OCI-LY7 (cell line): ENCODE measurements at regions of chr3 and their contacts with region 1.

Region 1: DNA sequence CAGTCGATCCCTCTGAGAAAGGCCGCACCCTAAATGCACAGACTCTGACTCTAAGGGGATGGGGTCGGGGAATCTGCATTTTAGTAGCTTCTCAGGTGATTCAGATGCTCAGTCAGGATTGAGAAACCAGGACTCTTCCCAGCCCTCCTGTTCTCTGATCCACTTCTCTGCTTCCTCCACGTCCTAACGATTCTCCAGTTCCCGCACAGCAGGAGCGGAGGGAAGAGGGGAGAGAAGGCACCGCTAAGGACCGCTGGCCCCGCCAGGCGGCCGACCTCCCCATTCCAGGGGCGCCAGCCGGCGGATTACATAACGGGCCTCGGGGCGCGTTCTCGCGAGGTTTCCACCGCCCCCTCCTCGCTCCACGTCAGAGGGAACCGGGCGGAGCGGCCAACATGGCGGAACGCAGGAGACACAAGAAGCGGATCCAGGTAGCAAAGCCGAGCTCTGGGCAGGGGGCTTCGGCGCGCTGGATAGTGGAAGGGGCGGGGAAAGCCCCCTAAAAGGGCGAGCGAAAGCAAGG is at the start of gene SEC62:
- DNase-seq: peak; percentile 97
- H3K4me3 ChIP-seq: peak within 1 kb of the TSS; percentile 81
- H3K27ac ChIP-seq: peak within 1 kb of the TSS; percentile 88
- H3K4me1 ChIP-seq: peaks cover 67% of the 10 kb centered on the region
- CTCF ChIP-seq: peak; percentile 78
- total RNA-seq, gene SEC62: 64.5 and 77.4 TPM in 2 replicates

Region 2: GRCh38 chr3:169295126-169295525 is 671.4 kb before region 1 on chr3:
- CTCF ChIA-PET with region 1: no interaction called
- POLR2A ChIA-PET with region 1: no interaction called
- intact Hi-C with region 1: no loop called
- DNase-seq: peak; percentile 13
- H3K4me3 ChIP-seq: no peak overlapping the region
- H3K27ac ChIP-seq: no peak overlapping the region
- H3K4me1 ChIP-seq: no peaks in the 10 kb centered on the region
- CTCF ChIP-seq: peak; percentile 80

Region 3: GRCh38 chr3:169722724-169723123 is 243.8 kb before region 1 on chr3:
- CTCF ChIA-PET with region 1: no interaction called
- POLR2A ChIA-PET with region 1: no interaction called
- intact Hi-C with region 1: no loop called
- DNase-seq: no peak
- H3K4me3 ChIP-seq: no peak overlapping the region
- H3K27ac ChIP-seq: no peak overlapping the region
- H3K4me1 ChIP-seq: no peaks in the 10 kb centered on the region
- CTCF ChIP-seq: no peak

Region 4: DNA sequence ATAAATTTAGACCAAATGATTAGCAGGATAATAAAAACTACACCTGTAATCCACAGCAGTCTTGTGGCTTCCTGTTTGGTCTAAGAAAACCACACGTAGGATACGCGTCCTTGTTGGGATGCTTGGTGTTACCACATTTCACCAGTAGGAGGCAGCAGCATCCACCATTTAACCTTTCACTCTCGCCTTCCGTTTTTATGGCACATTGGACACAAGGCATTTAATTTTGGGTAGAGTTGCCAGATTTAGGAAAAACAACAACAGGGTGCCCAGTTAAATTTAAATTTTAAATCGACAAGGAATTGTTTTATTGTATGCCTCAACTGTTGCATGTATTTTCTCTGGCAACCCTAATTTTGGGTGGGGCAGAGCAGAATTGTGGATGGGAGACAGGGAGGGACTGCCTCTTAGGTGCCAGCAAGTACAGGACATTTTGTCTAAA is 103.0 kb before region 1 on chr3:
- CTCF ChIA-PET with region 1: no interaction called
- POLR2A ChIA-PET with region 1: interaction called, 4 read pairs
- intact Hi-C with region 1: loop called (anchors 1 kb)
- DNase-seq: peak; percentile 85
- H3K4me3 ChIP-seq: no peak overlapping the region
- H3K27ac ChIP-seq: no peak overlapping the region
- H3K4me1 ChIP-seq: peaks cover 33% of the 10 kb centered on the region
- CTCF ChIP-seq: peak; percentile 99

Region 5: DNA sequence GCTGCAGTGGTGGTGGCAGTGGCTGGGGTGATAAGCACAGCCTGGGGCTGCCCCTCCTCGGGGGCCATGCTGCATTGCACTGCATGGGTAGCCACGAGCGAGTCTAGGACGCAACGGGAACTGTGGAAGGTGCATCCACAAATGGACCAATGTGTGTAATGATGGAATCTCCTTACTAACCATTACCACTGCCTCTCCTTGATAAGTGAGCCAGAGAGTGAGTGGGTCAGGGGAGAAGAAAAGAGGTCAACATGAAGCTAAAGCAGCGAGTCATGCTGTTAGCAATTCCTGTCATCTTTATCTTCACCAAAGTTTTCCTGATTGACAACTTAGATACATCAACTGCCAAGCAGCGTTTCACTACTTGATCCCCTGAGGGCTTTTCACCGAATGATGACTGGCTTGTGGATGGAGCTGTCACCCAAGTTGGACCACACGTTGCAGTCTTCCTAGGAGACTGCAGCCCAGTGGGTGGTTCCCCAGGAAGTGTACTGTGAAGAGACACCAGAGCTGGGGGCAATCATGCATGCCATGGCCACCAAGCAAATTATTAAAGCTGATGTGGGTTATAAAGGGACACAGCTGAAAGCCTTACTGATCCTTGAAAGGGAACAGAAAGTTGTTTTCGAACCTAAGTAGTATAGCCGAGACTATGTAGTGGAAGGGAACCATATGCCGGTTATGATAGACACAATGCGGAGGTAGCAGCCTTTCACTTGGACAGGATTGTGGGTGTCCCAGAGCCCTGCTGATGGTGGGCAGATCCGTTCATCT is 34.6 kb before region 1 on chr3:
- CTCF ChIA-PET with region 1: interaction called, 6 read pairs
- POLR2A ChIA-PET with region 1: interaction called, 559 read pairs
- intact Hi-C with region 1: loop called (anchors 1 kb)
- DNase-seq: peak; percentile 94
- H3K4me3 ChIP-seq: peak overlapping the region; percentile 56
- H3K27ac ChIP-seq: peak overlapping the region; percentile 86
- H3K4me1 ChIP-seq: peaks cover 81% of the 10 kb centered on the region
- CTCF ChIP-seq: no peak

Region 6: GRCh38 chr3:169954142-169954756 is 12.2 kb before region 1 on chr3:
- CTCF ChIA-PET with region 1: interaction called, 9 read pairs
- POLR2A ChIA-PET with region 1: interaction called, 559 read pairs
- intact Hi-C with region 1: no loop called
- DNase-seq: peak; percentile 36
- H3K4me3 ChIP-seq: peak overlapping the region; percentile 12
- H3K27ac ChIP-seq: peak overlapping the region; percentile 56
- H3K4me1 ChIP-seq: peaks cover 60% of the 10 kb centered on the region
- CTCF ChIP-seq: no peak

Region 7: DNA sequence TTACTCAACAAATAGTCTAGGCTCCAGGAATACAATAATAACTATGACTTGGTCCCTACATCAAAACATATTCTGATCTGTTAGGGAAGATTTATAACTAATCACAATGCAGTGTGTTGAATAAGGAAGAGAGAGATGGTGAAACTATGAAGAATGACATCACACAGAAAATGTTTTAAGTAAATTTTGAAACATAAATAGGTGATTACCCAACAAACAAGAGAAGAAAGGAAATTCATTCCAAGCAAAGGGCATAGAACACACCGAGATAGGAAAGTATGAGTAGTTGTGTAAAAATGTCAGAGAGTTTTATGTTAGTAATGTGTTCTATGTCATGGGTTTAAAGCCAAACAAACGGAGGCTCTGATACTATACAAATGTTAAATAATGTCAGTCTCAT is 13.6 kb after region 1 on chr3:
- CTCF ChIA-PET with region 1: interaction called, 3 read pairs
- POLR2A ChIA-PET with region 1: interaction called, 128 read pairs
- intact Hi-C with region 1: no loop called
- DNase-seq: no peak
- H3K4me3 ChIP-seq: no peak overlapping the region
- H3K27ac ChIP-seq: peak overlapping the region; percentile 78
- H3K4me1 ChIP-seq: peaks cover 65% of the 10 kb centered on the region
- CTCF ChIP-seq: no peak

Region 8: GRCh38 chr3:170044795-170045244 is 78.3 kb after region 1 on chr3:
- CTCF ChIA-PET with region 1: no interaction called
- POLR2A ChIA-PET with region 1: interaction called, 31 read pairs
- intact Hi-C with region 1: no loop called
- DNase-seq: peak; percentile 95
- H3K4me3 ChIP-seq: peak overlapping the region; percentile 57
- H3K27ac ChIP-seq: peak overlapping the region; percentile 98
- H3K4me1 ChIP-seq: peaks cover 75% of the 10 kb centered on the region
- CTCF ChIP-seq: no peak

Region 9: GRCh38 chr3:170726976-170727661 is 760.6 kb after region 1 on chr3:
- CTCF ChIA-PET with region 1: no interaction called
- POLR2A ChIA-PET with region 1: no interaction called
- intact Hi-C with region 1: no loop called
- DNase-seq: no peak
- H3K4me3 ChIP-seq: no peak overlapping the region
- H3K27ac ChIP-seq: no peak overlapping the region
- H3K4me1 ChIP-seq: no peaks in the 10 kb centered on the region
- CTCF ChIP-seq: no peak